Esophagus muscularis mucosa (tissue), 4 donors: ENCODE measurements at regions of chr7 and their contacts with region 1.

Region 1: GRCh38 chr7:83655951-83656556 is 7.1 kb upstream of the SEMA3E start:
- DNase-seq: no peak
- H3K4me3 ChIP-seq: no peak overlapping the region
- H3K27ac ChIP-seq: no peak overlapping the region
- H3K4me1 ChIP-seq: peaks cover 0 to 13% (median 6%) of the 10 kb centered on the region in 4 donors
- H3K27me3 ChIP-seq: no peaks in the 10 kb centered on the region
- CTCF ChIP-seq: peak; percentile 73 to 80 (median 79)
- EP300 ChIP-seq: no peak
- POLR2A ChIP-seq: no peak

Region 2: GRCh38 chr7:82945480-82945879 is 710.6 kb before region 1 on chr7:
- intact Hi-C with region 1: no loop called
- DNase-seq: no peak
- H3K4me3 ChIP-seq: no peak overlapping the region
- H3K27ac ChIP-seq: no peak overlapping the region
- H3K4me1 ChIP-seq: no peaks in the 10 kb centered on the region
- H3K27me3 ChIP-seq: no peaks in the 10 kb centered on the region
- CTCF ChIP-seq: no peak
- EP300 ChIP-seq: no peak
- POLR2A ChIP-seq: no peak

Region 3: GRCh38 chr7:83413831-83414230 is 242.2 kb before region 1 on chr7:
- intact Hi-C with region 1: loop called (anchors 2 kb)
- DNase-seq: no peak
- H3K4me3 ChIP-seq: no peak overlapping the region
- H3K27ac ChIP-seq: no peak overlapping the region
- H3K4me1 ChIP-seq: peaks cover 0 to 6% (median 0%) of the 10 kb centered on the region in 4 donors
- H3K27me3 ChIP-seq: no peaks in the 10 kb centered on the region
- CTCF ChIP-seq: no peak
- EP300 ChIP-seq: no peak
- POLR2A ChIP-seq: no peak

Region 4: GRCh38 chr7:85535974-85536729 is 1880.1 kb after region 1 on chr7:
- intact Hi-C with region 1: no loop called
- DNase-seq: no peak
- H3K4me3 ChIP-seq: no peak overlapping the region
- H3K27ac ChIP-seq: no peak overlapping the region
- H3K4me1 ChIP-seq: no peaks in the 10 kb centered on the region
- H3K27me3 ChIP-seq: no peaks in the 10 kb centered on the region
- CTCF ChIP-seq: no peak
- EP300 ChIP-seq: no peak
- POLR2A ChIP-seq: no peak